ENCODE measurements at regions of chr3 and their contacts with region 1.

Region 1: DNA sequence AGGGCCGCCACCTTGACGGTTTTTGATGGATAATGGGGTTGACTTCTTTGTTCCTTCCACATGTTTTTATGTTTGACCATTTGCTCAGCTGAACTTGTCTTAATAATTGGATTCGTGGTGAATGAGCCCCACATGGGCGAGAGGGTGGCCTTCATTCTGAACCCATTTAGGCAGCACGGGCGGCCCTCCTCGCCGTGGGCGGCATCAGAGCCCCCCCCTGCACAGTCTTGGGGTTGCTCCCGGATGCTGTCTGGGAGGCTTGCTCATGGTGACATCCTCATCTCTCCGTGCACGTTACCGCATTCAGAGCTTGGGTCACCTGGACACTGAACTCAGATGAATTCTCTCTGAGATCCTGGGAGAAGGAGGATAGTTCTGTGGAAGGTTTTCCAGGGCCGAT is 172.3 kb upstream of the OSBPL11 start:
- DNase-seq: no peak
- ATAC-seq: no peak

Region 2: GRCh38 chr3:125916376-125916978 is 148.8 kb after region 1 on chr3:
- intact Hi-C with region 1: loop called (anchors 5 kb)
- DNase-seq: no peak
- ATAC-seq: peak; percentile 98